GM18951 (cell line): ENCODE measurements at regions of chr15 and their contacts with region 1.

Region 1: DNA sequence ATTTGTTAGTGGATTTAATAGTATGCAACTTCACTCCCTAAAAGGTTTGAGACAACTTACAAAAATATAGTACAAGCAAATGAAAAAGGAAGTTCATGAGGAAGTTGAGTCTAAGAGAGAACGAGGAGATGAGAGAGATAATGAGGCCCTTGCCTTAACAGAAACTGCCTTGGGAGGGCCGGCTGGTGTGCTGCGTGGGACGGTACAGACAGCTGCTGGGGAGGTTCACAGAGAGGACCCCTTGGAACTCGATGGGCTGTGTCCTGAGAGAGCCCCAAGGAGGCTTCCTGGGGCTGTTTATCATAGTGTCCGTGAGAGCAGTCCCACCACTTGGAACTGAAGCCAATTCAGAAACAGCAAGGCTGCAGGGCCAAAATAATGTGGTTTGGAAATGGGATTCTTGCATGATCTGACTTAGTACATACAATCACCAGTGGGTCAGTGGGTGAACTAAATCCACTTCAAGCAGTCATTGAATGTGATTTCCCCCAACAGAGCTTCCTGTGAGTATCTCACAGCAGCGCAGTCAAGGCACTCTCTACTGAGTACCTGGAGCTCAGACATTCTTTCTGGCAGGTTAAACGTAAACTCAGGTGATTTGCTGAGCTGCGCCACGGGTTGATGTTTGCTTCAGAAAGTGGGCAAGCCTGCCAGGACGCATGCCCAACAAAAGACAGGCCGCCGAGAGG is 90.8 kb downstream of the CRTC3 start:
- POLR2A ChIP-seq: no peak

Region 2: DNA sequence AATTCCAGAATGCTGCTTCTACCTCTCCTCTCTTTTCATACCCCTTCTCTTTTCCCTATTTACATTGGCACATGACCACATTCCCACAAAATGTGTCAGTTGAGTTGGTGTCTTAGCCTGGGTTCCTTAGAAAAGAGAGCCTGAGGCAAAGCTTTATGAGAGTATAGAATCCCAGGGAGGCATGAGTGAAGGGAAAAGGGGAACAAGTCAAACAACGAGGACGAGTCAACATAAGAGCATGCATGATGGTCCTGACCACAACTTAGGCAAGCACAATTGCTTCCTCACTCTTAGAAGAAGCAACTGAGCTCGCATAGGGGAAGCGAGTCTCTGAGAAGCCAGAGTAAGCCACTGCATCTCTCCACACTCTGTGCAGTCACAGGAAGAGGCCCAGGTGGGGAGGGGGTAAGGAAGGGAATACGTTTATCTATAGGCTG is 283.8 kb before region 1 on chr15:
- in situ Hi-C with region 1: loop called (anchors 10 kb)
- POLR2A ChIP-seq: no peak

Region 3: DNA sequence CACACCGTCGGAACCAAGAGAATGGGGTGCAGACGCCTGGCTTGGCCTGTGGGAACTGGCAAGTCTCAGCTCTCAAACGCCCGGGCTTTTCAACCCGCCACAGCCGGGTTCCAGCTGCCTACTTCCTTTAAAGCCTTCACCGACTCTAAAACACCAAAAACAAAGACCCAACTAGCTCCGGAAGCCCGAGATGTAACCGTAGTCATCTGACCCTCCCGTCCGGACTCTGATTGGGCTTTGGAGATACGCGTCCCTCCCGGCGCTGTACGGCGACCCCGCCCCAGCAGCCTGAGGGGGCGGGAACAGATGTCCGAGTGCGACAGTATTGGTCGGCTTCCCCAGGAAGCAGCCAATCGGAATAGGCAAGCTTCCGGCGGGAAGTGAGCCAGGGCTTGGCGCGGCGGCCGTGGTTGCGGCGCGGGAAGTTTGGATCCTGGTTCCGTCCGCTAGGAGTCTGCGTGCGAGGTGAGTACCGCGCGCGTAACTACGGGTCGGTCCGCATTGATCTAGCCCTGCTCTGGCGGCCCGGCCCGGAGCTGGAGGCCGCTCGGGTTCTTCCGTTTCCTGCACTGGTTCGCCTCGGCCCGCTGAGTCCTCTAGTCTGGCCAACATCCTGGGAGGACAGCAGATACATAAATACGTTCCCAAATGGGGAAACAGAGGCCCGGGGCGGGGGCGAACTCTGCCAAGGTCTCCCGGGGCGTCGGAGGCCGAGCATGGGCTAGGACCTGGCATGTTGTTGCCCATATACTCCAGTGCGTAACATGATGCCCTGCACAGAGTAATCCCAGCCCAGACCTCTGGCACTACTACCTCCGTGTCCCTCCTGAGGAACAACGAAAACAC is 96.7 kb after region 1 on chr15 and contains the start of gene BLM:
- in situ Hi-C with region 1: no loop called
- POLR2A ChIP-seq: peak; percentile 76

Region 4: GRCh38 chr15:91508633-91509032 is 888.1 kb after region 1 on chr15:
- in situ Hi-C with region 1: no loop called
- POLR2A ChIP-seq: no peak